ENCODE measurements at regions of chr7 and their contacts with region 1.

Region 1: DNA sequence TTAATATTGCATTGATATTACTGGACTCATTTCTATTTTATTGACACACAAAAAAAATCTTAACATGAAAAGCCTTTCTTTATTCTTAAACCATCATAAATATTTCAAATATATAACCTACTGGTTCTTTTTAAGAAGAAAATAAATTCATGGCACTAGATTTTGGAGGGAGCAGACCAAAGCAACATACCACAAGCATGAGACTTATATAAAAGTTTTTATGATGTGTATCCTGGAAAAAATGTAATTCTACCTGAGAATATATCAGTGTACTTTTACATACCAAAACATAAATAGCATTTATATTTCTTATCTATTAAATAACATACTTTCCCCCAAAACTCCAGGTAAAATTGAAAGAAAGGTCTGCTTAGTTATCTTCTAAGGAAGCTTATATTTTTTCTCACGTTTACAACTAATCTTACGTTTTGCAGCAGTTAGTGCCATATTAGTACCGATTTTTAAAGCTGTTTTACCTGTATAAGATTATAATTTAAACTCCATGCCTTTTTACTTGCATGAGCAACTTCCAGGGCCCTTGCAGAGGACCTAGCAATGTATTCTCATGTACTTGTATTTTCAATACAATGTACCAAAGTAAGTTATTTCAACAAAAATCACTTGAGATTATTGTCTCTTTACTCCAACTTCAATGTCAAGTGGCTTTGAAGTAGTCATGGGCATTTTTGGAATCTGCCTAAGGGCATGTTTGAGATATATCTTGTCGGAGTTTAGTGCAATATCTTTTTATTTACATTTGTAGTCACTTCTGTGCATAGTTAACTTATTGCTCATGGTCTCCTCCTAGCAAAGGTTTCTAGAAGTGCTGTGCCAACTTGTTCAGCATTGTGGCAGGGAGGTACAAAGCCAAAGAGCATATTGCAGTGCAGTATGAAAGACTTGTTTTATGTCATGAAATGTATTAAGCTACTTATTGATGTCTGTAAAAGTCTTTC is 508.5 kb upstream of the SEMA3D start:
- DNase-seq: peak; percentile 65
- H3K4me3 Mint-ChIP-seq: no peak overlapping the region
- H3K27ac Mint-ChIP-seq: no peak overlapping the region
- H3K4me1 Mint-ChIP-seq: peaks cover 9% of the 10 kb centered on the region
- H3K27me3 Mint-ChIP-seq: no peaks in the 10 kb centered on the region
- CTCF ChIP-seq: no peak

Region 2: DNA sequence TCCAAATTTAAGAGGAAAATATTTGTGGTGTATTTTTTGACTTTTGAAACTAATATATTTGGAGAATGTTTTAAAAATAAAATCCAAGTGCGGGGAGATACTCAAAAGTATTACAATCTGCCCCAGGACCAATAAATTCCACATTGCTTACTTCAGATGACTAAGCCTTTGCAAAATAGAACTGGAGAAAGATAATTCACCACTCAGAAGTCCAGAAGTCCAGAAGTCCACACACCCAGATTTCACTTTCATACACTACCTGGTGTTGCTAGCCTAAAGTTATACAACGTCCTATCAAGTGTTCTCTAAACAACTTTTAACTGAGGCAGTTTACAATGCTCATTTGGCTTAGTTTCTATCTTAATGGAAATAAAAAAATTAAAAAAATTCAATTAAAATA is 21.4 kb before region 1 on chr7:
- CTCF ChIA-PET with region 1: no interaction called
- POLR2A ChIA-PET with region 1: no interaction called
- intact Hi-C with region 1: no loop called
- DNase-seq: no peak
- H3K4me3 Mint-ChIP-seq: no peak overlapping the region
- H3K27ac Mint-ChIP-seq: no peak overlapping the region
- H3K4me1 Mint-ChIP-seq: no peaks in the 10 kb centered on the region
- H3K27me3 Mint-ChIP-seq: no peaks in the 10 kb centered on the region
- CTCF ChIP-seq: no peak

Region 3: DNA sequence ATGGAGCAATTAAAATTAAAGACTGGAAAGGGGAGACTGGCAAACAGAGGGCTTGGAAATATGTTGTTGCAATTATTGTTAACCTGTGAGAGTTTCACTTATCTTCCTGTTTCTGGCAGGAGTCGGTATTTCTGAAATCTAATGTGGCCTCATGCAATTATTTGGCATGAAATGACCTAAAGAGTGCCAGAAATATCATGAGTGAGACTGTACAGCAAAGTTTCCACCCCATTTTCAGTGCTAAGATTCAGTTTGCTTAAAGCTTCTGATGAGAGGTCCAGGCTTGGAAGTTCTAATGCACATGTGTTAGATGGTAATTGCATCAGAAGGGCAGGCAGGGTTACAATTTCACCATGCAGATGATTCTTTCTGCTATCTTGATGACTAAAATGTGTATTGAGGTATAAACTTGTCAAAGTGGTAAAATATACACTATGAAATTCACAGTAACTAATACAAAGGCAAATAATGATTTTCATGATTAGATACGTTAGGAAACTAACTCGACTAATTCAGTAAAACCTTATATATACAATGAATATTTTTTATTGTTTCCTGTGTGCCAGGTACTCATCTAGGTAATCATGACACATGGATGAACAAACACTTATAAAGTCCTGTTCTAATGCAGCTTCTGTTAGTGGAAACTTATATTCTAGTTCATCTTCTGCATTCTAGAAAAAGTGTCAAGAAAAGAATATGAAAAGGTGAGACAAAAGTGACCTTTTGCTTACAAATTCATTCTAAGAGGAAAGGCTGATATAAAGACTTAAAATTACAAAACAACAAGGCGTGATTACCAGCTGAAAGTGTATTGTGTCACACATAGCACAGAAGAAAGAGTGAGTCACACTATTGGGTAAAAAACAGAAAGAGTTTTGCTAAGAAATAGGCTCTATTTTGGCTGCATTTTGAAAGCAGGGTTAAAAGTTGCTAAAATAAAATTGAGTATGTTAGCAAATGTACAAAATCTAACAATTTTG is 25.0 kb after region 1 on chr7:
- CTCF ChIA-PET with region 1: interaction called, 3 read pairs
- POLR2A ChIA-PET with region 1: interaction called, 10 read pairs
- intact Hi-C with region 1: loop called (anchors 1 kb)
- DNase-seq: peak; percentile 62
- H3K4me3 Mint-ChIP-seq: no peak overlapping the region
- H3K27ac Mint-ChIP-seq: peak overlapping the region; percentile 78
- H3K4me1 Mint-ChIP-seq: peaks cover 6% of the 10 kb centered on the region
- H3K27me3 Mint-ChIP-seq: no peaks in the 10 kb centered on the region
- CTCF ChIP-seq: no peak

Measured in MCF 10A (cell line).